GM12878 (cell line): ENCODE measurements at regions of chr12 and their contacts with region 1.

Region 1: GRCh38 chr12:92955997-92956663 is 27.0 kb upstream of the EEA1 start:
- DNase-seq: no peak
- ATAC-seq: no peak
- H3K4me3 ChIP-seq: no peak overlapping the region
- H3K27ac ChIP-seq: no peak overlapping the region
- H3K4me1 ChIP-seq: no peaks in the 10 kb centered on the region
- H3K27me3 ChIP-seq: no peaks in the 10 kb centered on the region
- CTCF ChIP-seq: no peak
- EP300 ChIP-seq: no peak
- POLR2A ChIP-seq: no peak
- RAD21 ChIP-seq: no peak

Region 2: GRCh38 chr12:92827836-92828431 is 128.2 kb before region 1 on chr12:
- CTCF ChIA-PET with region 1: no interaction called
- POLR2A ChIA-PET with region 1: no interaction called
- RAD21 ChIA-PET with region 1: no interaction called
- SMC1A ChIA-PET with region 1: no interaction called
- in situ Hi-C with region 1: no loop called
- intact Hi-C with region 1: no loop called
- DNase-seq: peak; percentile 12
- ATAC-seq: peak; percentile 81
- H3K4me3 ChIP-seq: no peak overlapping the region
- H3K27ac ChIP-seq: no peak overlapping the region
- H3K4me1 ChIP-seq: no peaks in the 10 kb centered on the region
- H3K27me3 ChIP-seq: no peaks in the 10 kb centered on the region
- CTCF ChIP-seq: peak; percentile 65 to 81 (median 81)
- EP300 ChIP-seq: no peak
- POLR2A ChIP-seq: no peak
- RAD21 ChIP-seq: peak; percentile 67

Region 3: DNA sequence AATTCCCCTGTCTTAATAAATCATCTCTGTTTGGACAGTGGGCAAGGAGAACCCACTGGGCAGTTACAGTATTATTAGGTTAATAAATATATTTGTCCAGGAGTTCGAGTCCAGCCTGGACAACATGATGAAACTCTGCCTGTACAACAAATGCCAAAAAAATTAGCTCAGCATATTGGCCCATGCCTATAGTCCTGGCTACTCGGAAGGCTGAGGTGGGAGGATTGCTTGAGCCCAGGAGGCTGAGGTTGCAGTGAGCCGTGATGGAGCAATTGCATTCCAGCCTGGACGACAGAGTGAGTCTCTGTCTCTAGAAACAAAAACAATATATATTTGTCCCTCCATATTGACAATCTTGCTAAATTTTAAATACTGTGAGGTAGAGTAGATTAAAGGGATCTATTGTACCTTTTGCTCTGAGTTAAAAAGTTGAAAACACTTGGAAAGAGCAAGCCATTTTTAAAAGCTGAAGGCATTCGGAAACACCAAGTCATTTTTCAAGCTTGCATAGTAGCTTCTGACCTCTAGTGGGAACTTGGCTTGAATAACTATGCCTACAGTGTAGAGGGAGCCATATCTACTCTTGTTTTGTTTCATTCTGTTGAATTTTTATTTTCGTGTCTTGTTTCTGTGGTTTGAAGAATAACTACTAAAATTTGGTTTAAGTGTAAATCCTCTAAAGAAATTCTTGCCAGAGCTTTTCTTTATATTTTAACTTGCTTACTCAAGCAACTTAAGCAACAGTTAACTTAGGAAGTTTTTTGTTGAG is 12.5 kb before region 1 on chr12:
- CTCF ChIA-PET with region 1: interaction called, 18 read pairs
- POLR2A ChIA-PET with region 1: interaction called, 4 read pairs
- RAD21 ChIA-PET with region 1: no interaction called
- SMC1A ChIA-PET with region 1: interaction called, 4 read pairs
- in situ Hi-C with region 1: no loop called
- intact Hi-C with region 1: no loop called
- DNase-seq: no peak
- ATAC-seq: peak; percentile 75
- H3K4me3 ChIP-seq: no peak overlapping the region
- H3K27ac ChIP-seq: no peak overlapping the region
- H3K4me1 ChIP-seq: no peaks in the 10 kb centered on the region
- H3K27me3 ChIP-seq: no peaks in the 10 kb centered on the region
- CTCF ChIP-seq: 0 out of 6 replicates have a peak, but pooled peaks have one; percentile 0 to 18 (median 6)
- EP300 ChIP-seq: no peak
- POLR2A ChIP-seq: no peak
- RAD21 ChIP-seq: no peak

Region 4: GRCh38 chr12:93019975-93020630 is 64.0 kb after region 1 on chr12:
- CTCF ChIA-PET with region 1: no interaction called
- POLR2A ChIA-PET with region 1: no interaction called
- RAD21 ChIA-PET with region 1: no interaction called
- SMC1A ChIA-PET with region 1: no interaction called
- in situ Hi-C with region 1: no loop called
- intact Hi-C with region 1: no loop called
- DNase-seq: no peak
- ATAC-seq: no peak
- H3K4me3 ChIP-seq: no peak overlapping the region
- H3K27ac ChIP-seq: no peak overlapping the region
- H3K4me1 ChIP-seq: no peaks in the 10 kb centered on the region
- H3K27me3 ChIP-seq: no peaks in the 10 kb centered on the region
- CTCF ChIP-seq: no peak
- EP300 ChIP-seq: no peak
- POLR2A ChIP-seq: no peak
- RAD21 ChIP-seq: no peak

Region 5: GRCh38 chr12:93048656-93049055 is 92.5 kb after region 1 on chr12:
- CTCF ChIA-PET with region 1: no interaction called
- POLR2A ChIA-PET with region 1: interaction called, 11 read pairs
- RAD21 ChIA-PET with region 1: no interaction called
- SMC1A ChIA-PET with region 1: no interaction called
- in situ Hi-C with region 1: no loop called
- intact Hi-C with region 1: no loop called
- DNase-seq: no peak
- ATAC-seq: no peak
- H3K4me3 ChIP-seq: no peak overlapping the region
- H3K27ac ChIP-seq: no peak overlapping the region
- H3K4me1 ChIP-seq: no peaks in the 10 kb centered on the region
- H3K27me3 ChIP-seq: no peaks in the 10 kb centered on the region
- CTCF ChIP-seq: no peak
- EP300 ChIP-seq: no peak
- POLR2A ChIP-seq: no peak
- RAD21 ChIP-seq: no peak